CD4-positive, alpha-beta T cell (primary cell): ENCODE measurements at regions of chr6 and their contacts with region 1.

Region 1: GRCh38 chr6:36442671-36443470 is at the starts of genes KCTD20 and PXT1:
- DNase-seq: peak; percentile 69 to 93 (median 80)
- ATAC-seq: peak; percentile 75
- H3K4me3 ChIP-seq: peak within 1 kb of the TSS; percentile 97
- H3K4me3 Mint-ChIP-seq: peak within 1 kb of the TSS; percentile 99
- H3K27ac ChIP-seq: peak within 1 kb of the TSS; percentile 85 to 92
- H3K27ac Mint-ChIP-seq: peak within 1 kb of the TSS; percentile 97
- H3K4me1 ChIP-seq: peaks cover 27% of the 10 kb centered on the region
- H3K4me1 Mint-ChIP-seq: peaks cover 61% of the 10 kb centered on the region
- H3K27me3 ChIP-seq: no peaks in the 10 kb centered on the region
- H3K27me3 Mint-ChIP-seq: no peaks in the 10 kb centered on the region
- CTCF ChIP-seq: no peak
- total RNA-seq, gene KCTD20: 38.4 to 39.5 TPM
- total RNA-seq, gene PXT1: 0.55 to 0.59 TPM

Region 2: GRCh38 chr6:36487698-36488097 is 44.8 kb after region 1 on chr6:
- CTCF ChIA-PET with region 1: no interaction called
- POLR2A ChIA-PET with region 1: no interaction called
- intact Hi-C with region 1: loop called (anchors 5 to 10 kb)
- DNase-seq: no peak
- ATAC-seq: no peak
- H3K4me3 ChIP-seq: no peak overlapping the region
- H3K4me3 Mint-ChIP-seq: no peak overlapping the region
- H3K27ac ChIP-seq: no peak overlapping the region
- H3K27ac Mint-ChIP-seq: peak overlapping the region; percentile 70
- H3K4me1 ChIP-seq: no peaks in the 10 kb centered on the region
- H3K4me1 Mint-ChIP-seq: peaks cover 34% of the 10 kb centered on the region
- H3K27me3 ChIP-seq: no peaks in the 10 kb centered on the region
- H3K27me3 Mint-ChIP-seq: no peaks in the 10 kb centered on the region
- CTCF ChIP-seq: no peak

Region 3: GRCh38 chr6:36493859-36494258 is 51.0 kb after region 1 on chr6:
- CTCF ChIA-PET with region 1: no interaction called
- POLR2A ChIA-PET with region 1: no interaction called
- intact Hi-C with region 1: loop called in 1 of 2 experiments (anchors 10 kb)
- DNase-seq: peak in 2 of 14 experiments; percentile 17 to 34
- ATAC-seq: no peak
- H3K4me3 ChIP-seq: no peak overlapping the region
- H3K4me3 Mint-ChIP-seq: no peak overlapping the region
- H3K27ac ChIP-seq: peak overlapping the region in 1 of 2 donors; percentile 19
- H3K27ac Mint-ChIP-seq: peak overlapping the region; percentile 84
- H3K4me1 ChIP-seq: peaks cover 14% of the 10 kb centered on the region
- H3K4me1 Mint-ChIP-seq: peaks cover 46% of the 10 kb centered on the region
- H3K27me3 ChIP-seq: no peaks in the 10 kb centered on the region
- H3K27me3 Mint-ChIP-seq: no peaks in the 10 kb centered on the region
- CTCF ChIP-seq: no peak

Region 4: GRCh38 chr6:36594029-36594815 is 151.4 kb after region 1 on chr6 and contains the start of gene SRSF3:
- CTCF ChIA-PET with region 1: no interaction called
- POLR2A ChIA-PET with region 1: interaction called, 4 read pairs
- intact Hi-C with region 1: loop called (anchors 2 to 5 kb)
- DNase-seq: peak; percentile 89 to 99 (median 94)
- ATAC-seq: peak; percentile 87
- H3K4me3 ChIP-seq: peak within 1 kb of the TSS; percentile 95
- H3K4me3 Mint-ChIP-seq: peak within 1 kb of the TSS; percentile 94
- H3K27ac ChIP-seq: peak within 1 kb of the TSS; percentile 97 to 99
- H3K27ac Mint-ChIP-seq: peak within 1 kb of the TSS; percentile 97
- H3K4me1 ChIP-seq: peaks cover 47% of the 10 kb centered on the region
- H3K4me1 Mint-ChIP-seq: peaks cover 54% of the 10 kb centered on the region
- H3K27me3 ChIP-seq: no peaks in the 10 kb centered on the region
- H3K27me3 Mint-ChIP-seq: peaks cover 5% of the 10 kb centered on the region
- CTCF ChIP-seq: peak; percentile 52
- total RNA-seq, gene SRSF3: 550 to 556 TPM